PC-3 (cell line): ENCODE measurements at regions of chr14 and their contacts with region 1.

Region 1: GRCh38 chr14:91177073-91178034 is 63.5 kb downstream of the DGLUCY start:
- DNase-seq: peak; percentile 89
- ATAC-seq: peak; percentile 78
- H3K4me3 ChIP-seq: no peak overlapping the region
- H3K27ac ChIP-seq: no peak overlapping the region
- H3K4me1 ChIP-seq: no peaks in the 10 kb centered on the region
- H3K27me3 ChIP-seq: no peaks in the 10 kb centered on the region
- CTCF ChIP-seq: peak; percentile 93

Region 2: GRCh38 chr14:91103116-91103515 is 74.2 kb before region 1 on chr14:
- CTCF ChIA-PET with region 1: no interaction called
- POLR2A ChIA-PET with region 1: interaction called, 11 read pairs
- intact Hi-C with region 1: no loop called
- DNase-seq: no peak
- ATAC-seq: no peak
- H3K4me3 ChIP-seq: no peak overlapping the region
- H3K27ac ChIP-seq: no peak overlapping the region
- H3K4me1 ChIP-seq: no peaks in the 10 kb centered on the region
- H3K27me3 ChIP-seq: no peaks in the 10 kb centered on the region; the same call in 1 of the 2 replicates
- CTCF ChIP-seq: no peak

Region 3: GRCh38 chr14:91119556-91120311 is 57.6 kb before region 1 on chr14:
- CTCF ChIA-PET with region 1: no interaction called
- POLR2A ChIA-PET with region 1: no interaction called
- intact Hi-C with region 1: no loop called
- DNase-seq: peak; percentile 84
- ATAC-seq: peak; percentile 78
- H3K4me3 ChIP-seq: no peak overlapping the region
- H3K27ac ChIP-seq: peak overlapping the region; percentile 69
- H3K4me1 ChIP-seq: peaks cover 21% of the 10 kb centered on the region
- H3K27me3 ChIP-seq: no peaks in the 10 kb centered on the region
- CTCF ChIP-seq: no peak

Region 4: GRCh38 chr14:91149479-91149921 is 27.9 kb before region 1 on chr14:
- CTCF ChIA-PET with region 1: interaction called, 13 read pairs
- POLR2A ChIA-PET with region 1: no interaction called
- intact Hi-C with region 1: no loop called
- DNase-seq: peak; percentile 100
- ATAC-seq: peak; percentile 98
- H3K4me3 ChIP-seq: no peak overlapping the region
- H3K27ac ChIP-seq: peak overlapping the region; percentile 43
- H3K4me1 ChIP-seq: peaks cover 12% of the 10 kb centered on the region
- H3K27me3 ChIP-seq: no peaks in the 10 kb centered on the region
- CTCF ChIP-seq: no peak

Region 5: DNA sequence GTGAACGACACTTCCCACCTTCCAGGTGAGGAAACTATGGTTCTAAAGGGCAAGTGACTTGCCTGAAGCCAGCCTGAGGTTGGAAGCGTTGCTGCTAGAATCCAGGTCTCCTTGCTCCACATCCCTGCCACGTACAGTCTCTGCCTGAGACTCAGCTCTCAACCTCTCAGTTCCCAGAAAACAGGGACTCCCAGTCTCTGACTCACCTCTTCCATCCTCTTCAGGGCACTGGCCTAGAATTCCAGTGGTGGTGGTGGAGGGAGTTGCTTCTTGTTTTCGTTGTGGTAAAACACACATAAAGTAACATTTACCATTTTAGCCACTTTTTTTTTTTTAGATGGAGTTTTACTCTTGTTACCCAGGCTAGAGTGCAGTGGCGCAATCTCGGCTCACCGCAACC is 59.9 kb after region 1 on chr14:
- CTCF ChIA-PET with region 1: no interaction called
- POLR2A ChIA-PET with region 1: no interaction called
- intact Hi-C with region 1: no loop called
- DNase-seq: no peak
- ATAC-seq: no peak
- H3K4me3 ChIP-seq: no peak overlapping the region
- H3K27ac ChIP-seq: no peak overlapping the region
- H3K4me1 ChIP-seq: no peaks in the 10 kb centered on the region
- H3K27me3 ChIP-seq: no peaks in the 10 kb centered on the region
- CTCF ChIP-seq: no peak

Region 6: GRCh38 chr14:91286530-91286937 is 109.2 kb after region 1 on chr14:
- CTCF ChIA-PET with region 1: interaction called, 13 read pairs
- POLR2A ChIA-PET with region 1: no interaction called
- intact Hi-C with region 1: loop called (anchors 1 kb)
- DNase-seq: peak; percentile 86
- ATAC-seq: peak; percentile 64
- H3K4me3 ChIP-seq: no peak overlapping the region
- H3K27ac ChIP-seq: no peak overlapping the region
- H3K4me1 ChIP-seq: peaks cover 28% of the 10 kb centered on the region
- H3K27me3 ChIP-seq: no peaks in the 10 kb centered on the region
- CTCF ChIP-seq: peak; percentile 93